ENCODE measurements at regions of chr22 and their contacts with region 1.

Region 1: DNA sequence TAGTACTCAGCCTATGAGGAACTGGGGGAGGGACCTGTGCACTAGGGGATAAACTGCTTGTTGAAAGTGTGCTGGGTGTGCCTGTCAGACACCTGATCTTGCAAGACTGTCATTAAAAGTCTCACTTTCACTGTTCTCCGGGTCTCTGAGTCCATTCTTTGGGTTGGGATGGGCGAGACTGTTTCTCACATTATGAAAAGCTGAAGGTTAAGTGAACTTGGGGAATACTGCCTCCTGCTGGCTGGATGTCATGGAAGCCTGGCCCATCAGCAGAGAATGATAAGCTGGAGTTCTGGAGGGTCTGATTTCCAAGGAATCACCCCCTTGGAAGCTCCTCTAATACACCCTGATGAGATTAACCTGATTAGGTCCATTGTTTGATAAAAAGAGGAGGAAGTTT is 9.0 kb upstream of the VPREB1 start:
- DNase-seq: peak in 1 of 2 donors; percentile 79
- ATAC-seq: peak in 1 of 3 donors; percentile 34
- H3K4me3 ChIP-seq: no peak overlapping the region
- H3K4me3 Mint-ChIP-seq: no peak overlapping the region
- H3K27ac ChIP-seq: no peak overlapping the region
- H3K27ac Mint-ChIP-seq: no peak overlapping the region
- H3K4me1 ChIP-seq: peaks cover 4% of the 10 kb centered on the region
- H3K4me1 Mint-ChIP-seq: no peaks in the 10 kb centered on the region
- H3K27me3 ChIP-seq: no peaks in the 10 kb centered on the region
- H3K27me3 Mint-ChIP-seq: no peaks in the 10 kb centered on the region
- CTCF ChIP-seq: peak; percentile 50

Region 2: GRCh38 chr22:21754523-21754922 is 481.0 kb before region 1 on chr22:
- intact Hi-C with region 1: no loop called
- DNase-seq: no peak
- ATAC-seq: peak in 2 of 3 donors; percentile 69 to 78
- H3K4me3 ChIP-seq: no peak overlapping the region
- H3K4me3 Mint-ChIP-seq: peak overlapping the region; percentile 38
- H3K27ac ChIP-seq: no peak overlapping the region
- H3K27ac Mint-ChIP-seq: peak overlapping the region; percentile 44 to 69
- H3K4me1 ChIP-seq: peaks cover 48% of the 10 kb centered on the region
- H3K4me1 Mint-ChIP-seq: peaks cover 68 to 73% of the 10 kb centered on the region in 2 donors
- H3K27me3 ChIP-seq: no peaks in the 10 kb centered on the region
- H3K27me3 Mint-ChIP-seq: no peaks in the 10 kb centered on the region
- CTCF ChIP-seq: no peak

Region 3: GRCh38 chr22:22156716-22157347 is 78.7 kb before region 1 on chr22:
- intact Hi-C with region 1: loop called (anchors 1 kb)
- DNase-seq: peak in 1 of 2 donors; percentile 86
- ATAC-seq: peak; percentile 79 to 93 (median 90)
- H3K4me3 ChIP-seq: no peak overlapping the region
- H3K4me3 Mint-ChIP-seq: no peak overlapping the region
- H3K27ac ChIP-seq: peak overlapping the region; percentile 53
- H3K27ac Mint-ChIP-seq: peak overlapping the region in 1 of 2 donors; percentile 66
- H3K4me1 ChIP-seq: peaks cover 7% of the 10 kb centered on the region
- H3K4me1 Mint-ChIP-seq: peaks cover 6 to 10% of the 10 kb centered on the region in 2 donors
- H3K27me3 ChIP-seq: peaks cover 2% of the 10 kb centered on the region
- H3K27me3 Mint-ChIP-seq: peaks cover 7 to 14% of the 10 kb centered on the region in 2 donors
- CTCF ChIP-seq: peak; percentile 82

Measured in natural killer cell (primary cell).